PC-9 (cell line): ENCODE measurements at regions of chr17 and their contacts with region 1.

Region 1: GRCh38 chr17:29214215-29215146 is 32.2 kb upstream of the CRYBA1 start:
- DNase-seq: no peak
- H3K4me3 ChIP-seq: no peak overlapping the region
- H3K27ac ChIP-seq: no peak overlapping the region
- H3K4me1 ChIP-seq: peaks cover 9% of the 10 kb centered on the region
- H3K27me3 ChIP-seq: no peaks in the 10 kb centered on the region
- CTCF ChIP-seq: no peak

Region 2: DNA sequence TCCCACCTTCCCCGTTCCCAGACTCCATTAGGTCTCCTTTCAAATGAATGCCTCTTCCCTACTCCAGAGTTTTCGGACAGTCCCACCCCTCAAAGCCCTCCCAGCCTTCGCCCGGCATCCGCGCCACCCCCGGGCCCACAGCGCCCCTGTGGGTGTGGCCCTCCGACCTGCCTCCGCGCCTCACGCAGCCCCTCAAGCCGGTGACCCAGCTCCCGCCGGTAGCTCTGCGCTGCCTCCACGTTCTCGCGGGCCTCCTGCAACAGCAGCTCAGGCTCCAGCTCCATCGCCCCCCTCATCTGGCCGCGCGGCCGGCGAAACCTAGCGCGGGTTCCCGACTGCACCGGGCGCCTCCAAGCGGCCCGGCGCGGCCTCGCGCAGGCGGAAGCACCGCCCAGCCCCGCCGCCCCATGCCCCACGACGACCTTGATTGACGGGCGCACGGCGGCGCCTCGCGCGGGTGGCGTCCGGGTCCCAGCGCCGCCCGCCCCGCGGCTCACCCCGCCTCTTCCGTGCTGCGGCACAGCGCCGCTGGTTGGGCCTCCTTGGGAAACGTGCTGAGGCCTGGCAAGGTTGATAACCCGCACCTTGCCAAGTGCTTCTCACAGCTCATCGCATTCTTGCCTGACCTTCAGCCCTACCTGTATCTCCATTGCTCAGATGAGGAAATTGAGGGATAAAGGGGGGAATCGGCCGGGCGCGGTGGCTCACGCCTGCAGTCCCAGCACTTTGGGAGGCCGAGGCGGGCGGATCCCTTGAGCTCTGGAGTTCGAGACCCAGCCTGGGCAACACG is 1610.1 kb after region 1 on chr17 and contains the start of gene CRLF3:
- CTCF ChIA-PET with region 1: interaction called, 27 read pairs
- POLR2A ChIA-PET with region 1: no interaction called
- intact Hi-C with region 1: no loop called
- DNase-seq: peak; percentile 69 to 91
- H3K4me3 ChIP-seq: peak within 1 kb of the TSS; percentile 98
- H3K27ac ChIP-seq: peak within 1 kb of the TSS; percentile 45
- H3K4me1 ChIP-seq: peaks cover 33% of the 10 kb centered on the region
- H3K27me3 ChIP-seq: no peaks in the 10 kb centered on the region
- CTCF ChIP-seq: no peak; the same call in 1 of the 2 replicates
- total RNA-seq, gene CRLF3: 12.9 and 14.1 TPM in 2 replicates